ENCODE measurements at regions of chr20 and their contacts with region 1.

Region 1: DNA sequence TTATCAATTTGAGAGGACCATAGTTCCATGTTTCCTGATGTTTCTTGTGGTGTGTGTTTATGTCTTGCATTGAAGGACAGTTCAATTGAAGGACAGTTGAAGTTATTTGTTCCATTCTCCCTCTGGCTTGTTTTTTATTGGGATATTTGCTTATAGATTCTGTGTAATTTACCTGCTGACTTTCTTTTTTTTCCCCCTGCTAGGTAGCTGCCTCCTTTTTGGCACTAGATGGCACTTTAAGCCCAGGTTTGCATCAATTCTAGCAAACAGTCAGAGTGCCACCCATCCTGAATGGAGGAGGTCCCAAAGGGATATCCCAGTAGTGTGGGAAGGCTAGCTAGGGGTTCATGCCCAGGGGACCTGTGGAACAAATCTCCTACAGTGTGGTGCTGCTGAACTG is 78.1 kb downstream of the CFAP61 start:
- DNase-seq: no peak
- ATAC-seq: peak in 2 of 4 donors; percentile 33 to 38
- H3K4me3 ChIP-seq: no peak overlapping the region
- H3K27ac ChIP-seq: no peak overlapping the region
- H3K4me1 ChIP-seq: peaks cover 0 to 5% (median 0%) of the 10 kb centered on the region in 12 donors
- H3K27me3 ChIP-seq: no peaks in the 10 kb centered on the region
- CTCF ChIP-seq: peak in 3 of 12 donors; percentile 5 to 23 (median 6)
- POLR2A ChIP-seq: no peak

Region 2: DNA sequence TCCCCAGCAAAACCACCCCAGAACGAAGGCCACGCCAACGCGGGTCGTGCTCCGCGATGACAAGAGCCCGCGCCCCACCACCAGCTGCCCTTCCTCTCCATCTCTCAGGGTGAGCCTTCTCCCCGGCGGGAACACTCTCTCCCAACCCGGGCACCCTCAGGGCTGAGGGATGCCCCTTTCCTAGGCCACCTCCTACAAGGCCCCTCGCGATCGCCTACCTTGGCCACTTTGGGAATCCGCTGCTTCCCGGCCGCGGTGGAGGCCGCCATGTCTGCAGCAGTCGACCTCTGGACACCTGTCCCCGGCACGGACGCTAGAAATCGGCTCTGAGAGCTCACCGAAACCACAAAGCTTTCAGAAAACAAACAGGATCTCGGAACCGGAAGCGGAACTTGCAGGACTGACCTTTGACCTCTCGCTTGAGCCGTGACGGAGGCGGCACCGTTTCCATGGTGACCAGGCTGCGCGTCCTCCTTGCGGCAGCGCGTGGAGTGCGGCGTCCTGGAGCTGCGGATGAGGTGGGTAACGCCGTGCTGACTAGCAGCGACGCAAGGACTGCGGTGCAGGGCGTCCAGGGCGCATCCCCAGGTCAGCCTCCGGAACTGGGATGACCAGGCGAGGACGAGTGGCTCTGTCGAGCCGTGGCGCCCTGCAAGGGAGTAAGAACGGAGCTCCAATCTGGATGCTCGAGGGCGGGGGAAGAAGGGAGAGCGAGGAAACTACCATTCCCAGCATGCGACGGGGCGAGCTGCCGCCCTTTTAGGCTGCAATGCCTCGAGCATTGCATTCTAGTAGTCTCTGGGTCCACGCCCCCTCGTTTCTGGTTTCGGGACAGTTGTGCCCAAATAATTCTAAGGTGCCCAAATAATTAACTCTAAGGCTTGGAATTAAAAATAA is 78.1 kb before region 1 on chr20 and contains the starts of genes CFAP61 and CRNKL1:
- intact Hi-C with region 1: no loop called
- DNase-seq: peak; percentile 96 to 98 (median 97)
- ATAC-seq: peak; percentile 95 to 99 (median 98)
- H3K4me3 ChIP-seq: peak within 1 kb of the TSS; percentile 67 to 99 (median 88)
- H3K27ac ChIP-seq: peak within 1 kb of the TSS; percentile 54 to 83 (median 79)
- H3K4me1 ChIP-seq: peaks cover 0 to 20% (median 12%) of the 10 kb centered on the region in 12 donors
- H3K27me3 ChIP-seq: no peaks in the 10 kb centered on the region
- CTCF ChIP-seq: peak in 1 of 12 donors; percentile 6
- POLR2A ChIP-seq: peak in 1 of 2 donors; percentile 20
- total RNA-seq, gene CFAP61: 17.5 to 102 (median 45.8) TPM
- total RNA-seq, gene CRNKL1: 13.4 to 21.5 (median 17.5) TPM

Region 3: GRCh38 chr20:20237093-20237959 is 106.9 kb after region 1 on chr20:
- intact Hi-C with region 1: loop called in 1 of 10 experiments (anchors 10 kb)
- DNase-seq: peak in 2 of 5 donors; percentile 32
- ATAC-seq: peak; percentile 25 to 81 (median 76)
- H3K4me3 ChIP-seq: no peak overlapping the region
- H3K27ac ChIP-seq: peak overlapping the region in 1 of 12 donors; percentile 14
- H3K4me1 ChIP-seq: peaks cover 0 to 9% (median 0%) of the 10 kb centered on the region in 12 donors
- H3K27me3 ChIP-seq: peaks cover 0 to 4% (median 0%) of the 10 kb centered on the region in 9 donors
- CTCF ChIP-seq: peak; percentile 55 to 77 (median 65)
- POLR2A ChIP-seq: no peak

Measured in heart left ventricle (tissue), 16 donors.